Left cardiac atrium (tissue), 4 donors: ENCODE measurements at regions of chr2 and their contacts with region 1.

Region 1: GRCh38 chr2:109201465-109202327 is 72.7 kb downstream of the SH3RF3 start:
- DNase-seq: no peak
- ATAC-seq: peak; percentile 37 to 60

Region 2: DNA sequence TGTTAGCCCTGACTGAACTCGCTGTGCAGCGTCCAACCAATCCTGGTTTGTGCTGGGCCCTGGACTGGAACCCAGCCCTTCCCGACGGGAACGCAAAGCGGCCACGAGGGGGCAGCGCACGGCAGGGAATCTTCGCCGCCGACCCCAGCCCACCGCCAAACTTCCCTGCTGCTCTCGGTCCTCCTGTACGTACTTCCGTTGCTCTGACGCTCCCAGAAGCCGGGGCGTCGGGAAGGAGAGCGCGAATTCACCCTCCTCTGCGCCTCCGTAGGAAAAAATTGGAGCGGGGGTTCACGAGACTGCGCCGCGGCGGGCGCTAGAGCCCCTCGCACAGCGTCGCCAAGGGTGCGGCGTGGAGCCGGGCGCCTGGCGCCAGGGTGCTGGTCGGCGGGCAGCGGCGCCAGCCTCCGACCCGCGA is 73.6 kb before region 1 on chr2:
- intact Hi-C with region 1: loop called in 1 of 2 experiments (anchors 5 kb)
- DNase-seq: peak; percentile 89
- ATAC-seq: peak; percentile 84 to 90

Region 3: DNA sequence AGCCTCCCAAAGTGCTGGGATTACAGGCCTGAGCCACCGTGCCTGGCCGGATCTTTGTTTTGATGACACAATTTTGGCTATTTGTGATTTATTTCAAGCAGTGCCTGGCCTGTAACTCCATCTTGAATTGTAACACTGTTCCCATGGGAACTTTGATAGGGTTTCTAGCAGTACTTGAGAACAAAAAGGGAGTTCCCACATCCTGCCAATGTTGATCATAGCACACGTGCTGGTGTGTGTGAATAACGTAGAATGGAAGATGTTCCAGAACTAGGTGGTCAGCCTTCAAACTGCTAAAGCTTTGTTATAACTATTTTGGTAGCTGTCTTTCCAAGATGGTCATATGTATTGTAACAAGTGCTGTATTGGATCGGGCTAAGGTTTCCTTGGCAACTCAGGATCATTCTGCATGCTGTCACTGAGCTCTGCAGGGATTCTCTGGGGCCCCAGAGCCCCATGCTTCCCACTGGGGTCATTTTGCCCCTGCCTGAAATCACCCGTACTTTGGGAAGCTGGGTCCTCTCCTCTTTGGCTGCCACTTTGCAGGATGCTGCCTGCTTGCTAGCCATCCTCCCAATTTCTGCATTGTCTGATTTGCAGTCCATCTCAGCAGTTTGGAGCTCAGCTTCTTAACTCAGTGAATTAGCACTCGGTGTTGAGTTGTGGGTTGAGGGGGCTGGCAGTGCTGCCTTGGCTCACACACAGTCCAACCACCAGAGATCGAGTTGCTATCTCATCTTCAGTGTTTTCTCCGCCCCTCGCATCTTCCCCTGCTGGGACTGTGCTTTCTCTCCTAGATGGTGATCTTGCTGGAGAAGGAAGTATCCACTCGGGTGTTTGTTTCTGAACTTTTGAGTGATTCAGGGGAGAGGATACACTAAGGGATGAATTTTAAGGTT is 45.9 kb before region 1 on chr2:
- intact Hi-C with region 1: no loop called
- DNase-seq: no peak
- ATAC-seq: peak; percentile 44 to 63